ENCODE measurements at regions of chr7 and their contacts with region 1.

Region 1: DNA sequence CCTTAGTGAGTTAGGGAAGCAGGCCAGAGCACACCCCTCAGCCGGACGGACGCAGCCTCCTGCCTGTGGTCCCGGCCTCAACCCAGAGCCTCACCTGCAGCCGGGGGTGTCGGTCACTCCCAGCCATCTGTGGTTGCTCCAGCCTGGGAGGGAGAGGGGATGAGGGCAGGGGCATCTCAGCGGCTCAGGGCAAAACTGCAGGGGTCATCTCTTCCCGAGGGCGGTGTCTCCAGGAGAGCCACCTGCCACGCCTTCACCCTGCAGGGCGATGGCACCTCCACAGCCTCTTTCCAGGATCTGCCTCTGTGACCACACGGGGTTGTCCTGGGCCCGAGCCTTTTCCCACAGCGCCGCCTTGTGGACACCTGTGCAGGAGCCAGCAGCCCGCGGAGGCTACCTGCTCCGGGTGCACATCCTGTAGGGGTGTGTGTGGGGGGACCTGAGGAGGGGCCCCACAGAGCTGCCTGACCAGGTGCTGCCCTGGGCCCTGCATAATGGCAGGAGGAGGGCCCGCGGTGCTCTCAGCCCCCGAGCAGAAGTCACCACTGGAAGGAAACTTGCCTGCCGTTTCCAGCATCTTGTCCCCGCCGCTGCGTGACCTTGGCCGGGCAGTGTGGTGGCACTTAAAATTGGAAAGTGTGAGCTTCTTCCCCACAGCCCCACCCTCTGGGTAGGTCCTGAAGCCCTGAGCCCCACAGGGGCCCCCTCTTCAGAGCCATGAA is 21.6 kb upstream of the AP5Z1 start:
- DNase-seq: peak; percentile 74 to 86
- H3K4me3 ChIP-seq: no peak overlapping the region
- H3K4me3 Mint-ChIP-seq: no peak overlapping the region
- H3K27ac Mint-ChIP-seq: no peak overlapping the region
- H3K4me1 ChIP-seq: 0 out of 2 replicates have a peak, but pooled peaks cover 4% of the 10 kb centered on the region
- H3K4me1 Mint-ChIP-seq: no peaks in the 10 kb centered on the region
- H3K27me3 ChIP-seq: no peaks in the 10 kb centered on the region
- H3K27me3 Mint-ChIP-seq: no peaks in the 10 kb centered on the region
- CTCF ChIP-seq: peak; percentile 81 to 93

Region 2: DNA sequence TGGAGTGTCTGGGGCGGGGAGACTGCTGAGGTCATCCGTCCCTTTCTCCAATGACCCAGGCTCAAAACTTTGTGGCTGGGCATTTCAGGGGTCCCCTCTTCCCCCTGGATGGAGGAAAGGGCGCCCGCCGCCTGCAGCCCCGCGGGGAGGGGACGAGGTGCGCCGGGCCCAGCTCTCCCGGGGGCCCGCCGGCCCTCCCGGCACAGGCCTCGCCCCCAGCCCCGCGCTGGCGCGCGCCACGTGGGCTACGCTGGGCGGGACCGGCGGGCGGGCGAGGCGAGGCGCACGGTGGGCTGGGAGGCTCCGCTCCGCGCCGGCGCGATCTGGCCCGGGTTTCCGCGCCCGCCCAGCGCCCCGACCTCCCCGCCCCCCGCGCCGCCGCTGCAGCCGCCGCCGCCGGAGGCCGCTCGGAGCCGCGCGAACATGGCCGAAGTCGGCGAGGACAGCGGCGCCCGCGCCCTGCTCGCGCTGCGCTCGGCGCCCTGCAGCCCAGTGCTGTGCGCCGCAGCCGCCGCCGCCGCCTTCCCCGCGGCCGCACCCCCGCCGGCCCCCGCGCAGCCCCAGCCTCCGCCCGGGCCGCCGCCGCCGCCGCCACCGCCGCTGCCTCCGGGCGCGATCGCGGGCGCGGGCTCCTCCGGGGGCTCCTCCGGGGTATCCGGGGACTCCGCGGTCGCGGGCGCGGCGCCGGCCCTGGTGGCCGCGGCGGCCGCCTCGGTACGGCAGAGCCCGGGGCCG is 71.8 kb before region 1 on chr7 and contains the start of gene FOXK1:
- CTCF ChIA-PET with region 1: no interaction called
- POLR2A ChIA-PET with region 1: no interaction called
- intact Hi-C with region 1: loop called (anchors 5 kb)
- DNase-seq: peak; percentile 69 to 90
- H3K4me3 ChIP-seq: peak within 1 kb of the TSS; percentile 100
- H3K4me3 Mint-ChIP-seq: peak within 1 kb of the TSS; percentile 94
- H3K27ac Mint-ChIP-seq: peak within 1 kb of the TSS; percentile 96
- H3K4me1 ChIP-seq: peaks cover 6% of the 10 kb centered on the region; the same call in 1 of the 2 replicates
- H3K4me1 Mint-ChIP-seq: peaks cover 18% of the 10 kb centered on the region
- H3K27me3 ChIP-seq: no peaks in the 10 kb centered on the region
- H3K27me3 Mint-ChIP-seq: no peaks in the 10 kb centered on the region
- CTCF ChIP-seq: no peak
- total RNA-seq, gene FOXK1: 50.8 and 51.2 TPM in 2 replicates

Region 3: DNA sequence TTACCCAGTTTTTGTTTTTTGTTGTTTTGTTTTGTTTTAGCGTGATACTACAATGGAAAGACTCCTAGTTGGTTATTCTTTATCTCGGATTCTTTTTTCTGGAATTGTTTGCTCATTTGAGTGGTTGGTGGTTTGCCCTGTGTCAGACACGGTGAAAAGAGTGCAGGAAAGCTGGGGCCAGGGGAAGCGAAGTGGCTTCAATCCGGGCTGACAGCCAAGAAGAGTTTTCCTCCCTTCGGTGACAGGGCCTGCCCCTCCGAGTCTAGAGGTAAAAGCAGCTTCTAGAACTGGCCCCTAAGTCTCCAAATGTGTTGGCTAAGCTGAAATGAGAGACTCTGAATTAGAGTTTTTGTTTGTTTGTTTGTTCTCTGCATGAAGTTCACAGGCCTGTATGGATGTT is 15.9 kb after region 1 on chr7:
- CTCF ChIA-PET with region 1: no interaction called
- POLR2A ChIA-PET with region 1: no interaction called
- intact Hi-C with region 1: no loop called
- DNase-seq: no peak
- H3K4me3 ChIP-seq: no peak overlapping the region
- H3K4me3 Mint-ChIP-seq: no peak overlapping the region
- H3K27ac Mint-ChIP-seq: peak overlapping the region; percentile 39
- H3K4me1 ChIP-seq: 0 out of 2 replicates have a peak, but pooled peaks cover 11% of the 10 kb centered on the region
- H3K4me1 Mint-ChIP-seq: peaks cover 12% of the 10 kb centered on the region
- H3K27me3 ChIP-seq: no peaks in the 10 kb centered on the region
- H3K27me3 Mint-ChIP-seq: no peaks in the 10 kb centered on the region
- CTCF ChIP-seq: no peak